Heart left ventricle (tissue), 16 donors: ENCODE measurements at regions of chr16 and their contacts with region 1.

Region 1: GRCh38 chr16:4846891-4847773 is at the starts of genes GLYR1 and UBN1:
- DNase-seq: peak; percentile 100
- ATAC-seq: peak; percentile 96 to 98 (median 97)
- H3K4me3 ChIP-seq: peak within 1 kb of the TSS; percentile 67 to 99 (median 90)
- H3K27ac ChIP-seq: peak within 1 kb of the TSS; percentile 88 to 99 (median 96)
- H3K4me1 ChIP-seq: peaks cover 0 to 66% (median 47%) of the 10 kb centered on the region in 12 donors
- H3K27me3 ChIP-seq: no peaks in the 10 kb centered on the region
- CTCF ChIP-seq: no peak
- POLR2A ChIP-seq: peak; percentile 34 to 91
- total RNA-seq, gene GLYR1: 54.3 to 96.6 (median 75.8) TPM
- total RNA-seq, gene UBN1: 25.0 to 77.9 (median 32.7) TPM

Region 2: GRCh38 chr16:4538350-4539235 is 308.5 kb before region 1 on chr16 and contains the start of gene CDIP1:
- intact Hi-C with region 1: no loop called
- DNase-seq: peak; percentile 96 to 98 (median 98)
- ATAC-seq: peak; percentile 92 to 97 (median 96)
- H3K4me3 ChIP-seq: peak within 1 kb of the TSS; percentile 69 to 97 (median 86)
- H3K27ac ChIP-seq: peak within 1 kb of the TSS; percentile 70 to 99 (median 92)
- H3K4me1 ChIP-seq: peaks cover 0 to 40% (median 17%) of the 10 kb centered on the region in 12 donors
- H3K27me3 ChIP-seq: no peaks in the 10 kb centered on the region
- CTCF ChIP-seq: peak in 4 of 12 donors; percentile 8 to 28 (median 13)
- POLR2A ChIP-seq: peak; percentile 61 to 92
- total RNA-seq, gene CDIP1: 44.6 to 51.1 (median 46.4) TPM

Region 3: GRCh38 chr16:4734063-4734729 is 112.9 kb before region 1 on chr16 and contains the starts of genes ANKS3 and DNAAF8:
- intact Hi-C with region 1: loop called in 1 of 10 experiments (anchors 2 kb)
- DNase-seq: peak; percentile 95 to 99 (median 97)
- ATAC-seq: peak; percentile 98 to 99 (median 98)
- H3K4me3 ChIP-seq: peak within 1 kb of the TSS; percentile 61 to 99 (median 91)
- H3K27ac ChIP-seq: peak within 1 kb of the TSS; percentile 47 to 90 (median 78)
- H3K4me1 ChIP-seq: peaks cover 0 to 17% (median 15%) of the 10 kb centered on the region in 12 donors
- H3K27me3 ChIP-seq: no peaks in the 10 kb centered on the region
- CTCF ChIP-seq: no peak
- POLR2A ChIP-seq: peak in 1 of 2 donors; percentile 56
- total RNA-seq, gene ANKS3: 5.1 to 12.5 (median 8.6) TPM
- total RNA-seq, gene DNAAF8: 0.34 to 3.4 (median 0.70) TPM

Region 4: DNA sequence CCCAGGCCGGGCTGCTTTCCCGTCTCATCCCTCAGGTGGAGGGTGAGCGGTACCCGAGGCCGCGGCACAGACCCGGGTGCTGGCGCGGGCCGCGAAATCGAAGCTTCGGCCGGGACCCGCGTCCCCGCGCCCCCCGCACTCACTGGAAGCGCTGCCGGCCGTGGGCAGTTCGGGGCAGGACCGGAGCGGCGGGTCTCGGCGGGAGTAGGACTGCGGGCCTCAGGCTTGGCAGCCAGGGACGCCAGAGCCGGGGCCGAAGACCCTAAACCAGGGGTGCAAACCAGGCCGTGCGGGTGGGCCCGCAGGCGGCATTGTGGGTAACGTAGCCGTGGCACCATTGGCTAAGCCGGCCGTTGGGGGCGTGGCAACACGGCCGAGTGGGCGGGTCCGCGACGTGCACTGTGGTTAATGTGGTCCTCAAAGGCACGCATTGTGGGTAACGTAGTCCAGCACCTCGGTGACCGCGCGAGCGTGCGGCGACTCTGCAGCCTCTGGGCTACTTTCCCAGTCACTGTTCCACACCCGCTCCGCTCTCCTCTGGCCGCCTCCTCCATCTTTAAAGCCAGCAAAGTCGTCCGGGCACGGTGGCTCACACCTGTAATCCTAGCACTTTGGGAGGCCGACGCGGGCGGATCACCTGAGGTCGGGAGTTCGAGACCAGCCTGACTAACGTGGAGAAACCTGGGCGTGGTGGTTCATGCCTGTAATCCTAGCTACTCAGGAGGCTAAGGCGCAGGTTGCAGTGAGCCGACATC is 80.1 kb before region 1 on chr16 and contains the start of gene ZNF500:
- intact Hi-C with region 1: loop called in 1 of 10 experiments (anchors 5 kb)
- DNase-seq: peak; percentile 98 to 99 (median 98)
- ATAC-seq: peak; percentile 92 to 97 (median 96)
- H3K4me3 ChIP-seq: peak within 1 kb of the TSS; percentile 76 to 97 (median 89)
- H3K27ac ChIP-seq: peak within 1 kb of the TSS; percentile 45 to 90 (median 88)
- H3K4me1 ChIP-seq: peaks cover 9 to 37% (median 32%) of the 10 kb centered on the region in 12 donors
- H3K27me3 ChIP-seq: no peaks in the 10 kb centered on the region
- CTCF ChIP-seq: no peak
- POLR2A ChIP-seq: peak in 1 of 2 donors; percentile 82
- total RNA-seq, gene ZNF500: 4.8 to 11.6 (median 6.5) TPM

Region 5: GRCh38 chr16:4802659-4803287 is 44.4 kb before region 1 on chr16:
- intact Hi-C with region 1: loop called in 5 of 10 experiments (anchors 5 kb)
- DNase-seq: peak; percentile 94 to 96 (median 95)
- ATAC-seq: peak; percentile 89 to 94 (median 92)
- H3K4me3 ChIP-seq: peak overlapping the region; percentile 68 to 96 (median 86)
- H3K27ac ChIP-seq: peak overlapping the region; percentile 47 to 96 (median 90)
- H3K4me1 ChIP-seq: peaks cover 0 to 50% (median 25%) of the 10 kb centered on the region in 12 donors
- H3K27me3 ChIP-seq: no peaks in the 10 kb centered on the region
- CTCF ChIP-seq: peak in 8 of 12 donors; percentile 5 to 53 (median 32)
- POLR2A ChIP-seq: peak in 1 of 2 donors; percentile 53

Region 6: DNA sequence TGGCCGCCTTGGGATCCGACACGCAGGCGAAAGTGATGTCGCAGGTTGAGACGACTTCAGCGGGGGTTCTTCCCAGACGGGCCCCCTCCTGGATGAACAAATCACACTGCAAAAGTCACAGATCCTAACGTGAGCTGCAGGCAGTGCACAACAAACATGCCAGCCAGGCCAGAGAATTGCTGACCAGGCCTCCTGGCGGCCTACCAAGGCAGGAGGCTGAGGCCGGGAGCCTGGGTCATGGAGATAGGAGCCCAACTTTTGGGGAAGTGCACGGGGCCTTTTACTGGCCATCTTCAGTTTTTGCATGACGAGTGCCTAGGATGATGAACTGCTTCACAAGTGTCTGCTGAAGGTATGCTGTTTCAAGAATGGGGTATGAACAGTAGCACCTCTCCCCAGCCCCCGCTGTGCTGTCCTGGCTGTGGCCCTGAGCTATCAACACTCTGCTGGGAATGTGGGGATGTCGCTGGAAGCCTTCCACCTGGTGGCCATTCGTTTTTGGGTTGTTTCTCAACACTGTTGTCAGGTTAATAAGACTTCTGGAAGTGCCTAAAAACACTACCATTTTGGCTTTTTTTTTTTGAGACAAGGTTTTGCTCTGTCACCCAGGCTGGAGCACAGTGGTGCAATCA is 32.5 kb before region 1 on chr16:
- intact Hi-C with region 1: loop called in 2 of 10 experiments (anchors 5 kb)
- DNase-seq: peak in 4 of 5 donors; percentile 33 to 67 (median 52)
- ATAC-seq: peak; percentile 72 to 77 (median 75)
- H3K4me3 ChIP-seq: no peak overlapping the region
- H3K27ac ChIP-seq: peak overlapping the region; percentile 15 to 94 (median 82)
- H3K4me1 ChIP-seq: peaks cover 0 to 20% (median 2%) of the 10 kb centered on the region in 12 donors
- H3K27me3 ChIP-seq: no peaks in the 10 kb centered on the region
- CTCF ChIP-seq: no peak
- POLR2A ChIP-seq: no peak

Region 7: DNA sequence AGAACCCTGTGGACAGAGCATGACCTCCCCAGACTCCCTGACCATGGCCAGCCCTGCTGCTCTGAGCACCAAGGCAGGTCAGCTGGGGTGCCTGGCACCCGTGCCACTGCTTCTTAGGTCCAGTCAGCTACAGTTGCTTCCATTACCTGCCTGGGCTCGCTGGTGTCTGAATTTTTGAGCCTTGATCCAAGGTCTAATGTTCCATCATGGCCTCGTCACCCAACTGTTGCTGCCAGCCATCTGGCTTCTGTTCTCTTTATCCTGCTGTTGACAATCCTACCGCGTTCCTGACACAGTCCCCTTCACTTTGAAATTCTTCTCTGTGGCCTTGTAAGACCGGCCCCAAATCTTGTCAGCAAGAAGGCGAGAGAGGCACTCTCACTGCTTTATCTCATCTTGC is 16.7 kb before region 1 on chr16:
- intact Hi-C with region 1: loop called in 1 of 10 experiments (anchors 2 kb)
- DNase-seq: peak in 4 of 5 donors; percentile 27 to 67 (median 43)
- ATAC-seq: peak in 3 of 4 donors; percentile 30 to 58 (median 47)
- H3K4me3 ChIP-seq: no peak overlapping the region
- H3K27ac ChIP-seq: peak overlapping the region; percentile 6 to 94 (median 84)
- H3K4me1 ChIP-seq: peaks cover 0 to 71% (median 27%) of the 10 kb centered on the region in 12 donors
- H3K27me3 ChIP-seq: no peaks in the 10 kb centered on the region
- CTCF ChIP-seq: no peak
- POLR2A ChIP-seq: no peak

Region 8: GRCh38 chr16:4944333-4945281 is 97.5 kb after region 1 on chr16:
- intact Hi-C with region 1: loop called in 3 of 10 experiments (anchors 5 to 10 kb)
- DNase-seq: peak; percentile 80 to 94 (median 89)
- ATAC-seq: peak; percentile 81 to 92 (median 90)
- H3K4me3 ChIP-seq: no peak overlapping the region
- H3K27ac ChIP-seq: peak overlapping the region in 10 of 12 donors; percentile 34 to 76 (median 64)
- H3K4me1 ChIP-seq: peaks cover 0 to 39% (median 25%) of the 10 kb centered on the region in 12 donors
- H3K27me3 ChIP-seq: no peaks in the 10 kb centered on the region
- CTCF ChIP-seq: no peak
- POLR2A ChIP-seq: no peak